Activated CD4-positive, alpha-beta memory T cell treated with anti-CD3 and anti-CD28 coated beads, Interleukin-2, amount 10 ng/mL, durations not matched to agents 7 days and 5 days (primary cell): ENCODE measurements at regions of chr3 and their contacts with region 1.

Region 1: GRCh38 chr3:148991194-148992026 is at the start of gene GYG1:
- DNase-seq: peak; percentile 80
- H3K4me3 Mint-ChIP-seq: peak within 1 kb of the TSS; percentile 73
- H3K27ac Mint-ChIP-seq: peak within 1 kb of the TSS; percentile 81
- H3K4me1 Mint-ChIP-seq: peaks cover 28% of the 10 kb centered on the region
- H3K27me3 Mint-ChIP-seq: no peaks in the 10 kb centered on the region
- total RNA-seq, gene GYG1: 44.5 to 46.5 TPM

Region 2: DNA sequence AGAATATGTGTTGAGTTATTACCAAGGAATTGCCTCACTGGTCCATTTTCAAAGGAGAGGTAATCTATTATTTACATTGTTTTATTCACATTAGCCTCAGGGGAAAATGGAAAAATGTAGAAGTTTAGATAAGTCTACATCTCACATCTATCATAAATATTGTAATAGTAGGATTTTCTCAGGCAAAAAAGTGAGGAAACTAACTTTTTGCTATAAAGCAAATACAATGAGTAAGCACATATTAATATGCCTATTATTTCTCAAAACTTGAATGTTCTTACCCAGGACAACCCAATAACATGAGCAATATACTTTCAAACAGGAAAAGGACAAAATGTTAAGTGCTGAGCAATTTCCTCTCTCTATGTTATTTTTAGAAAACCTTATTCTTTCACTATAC is 478.2 kb before region 1 on chr3:
- CTCF ChIA-PET with region 1: no interaction called
- POLR2A ChIA-PET with region 1: no interaction called
- DNase-seq: no peak
- H3K4me3 Mint-ChIP-seq: no peak overlapping the region
- H3K27ac Mint-ChIP-seq: no peak overlapping the region
- H3K4me1 Mint-ChIP-seq: no peaks in the 10 kb centered on the region
- H3K27me3 Mint-ChIP-seq: no peaks in the 10 kb centered on the region

Region 3: DNA sequence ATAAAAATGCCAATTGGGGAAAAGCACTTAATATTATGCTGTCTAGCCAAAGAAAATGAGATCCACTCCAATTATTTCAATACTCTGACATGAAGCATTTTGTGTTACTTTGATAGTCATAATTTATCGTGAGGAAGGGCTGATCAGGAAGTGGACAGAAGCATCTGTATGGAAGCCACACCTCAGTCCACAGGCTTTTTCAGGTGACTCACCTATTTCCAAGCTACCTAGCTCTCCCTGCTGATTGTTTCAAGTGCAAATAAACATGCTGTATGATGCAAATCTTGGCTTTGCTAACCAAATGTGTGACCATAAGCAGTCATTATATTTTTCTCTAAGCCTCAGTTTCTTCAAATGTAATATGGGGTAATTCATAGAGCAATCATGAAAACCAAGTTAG is 194.6 kb before region 1 on chr3:
- CTCF ChIA-PET with region 1: no interaction called
- POLR2A ChIA-PET with region 1: no interaction called
- DNase-seq: no peak
- H3K4me3 Mint-ChIP-seq: no peak overlapping the region
- H3K27ac Mint-ChIP-seq: no peak overlapping the region
- H3K4me1 Mint-ChIP-seq: no peaks in the 10 kb centered on the region
- H3K27me3 Mint-ChIP-seq: no peaks in the 10 kb centered on the region

Region 4: DNA sequence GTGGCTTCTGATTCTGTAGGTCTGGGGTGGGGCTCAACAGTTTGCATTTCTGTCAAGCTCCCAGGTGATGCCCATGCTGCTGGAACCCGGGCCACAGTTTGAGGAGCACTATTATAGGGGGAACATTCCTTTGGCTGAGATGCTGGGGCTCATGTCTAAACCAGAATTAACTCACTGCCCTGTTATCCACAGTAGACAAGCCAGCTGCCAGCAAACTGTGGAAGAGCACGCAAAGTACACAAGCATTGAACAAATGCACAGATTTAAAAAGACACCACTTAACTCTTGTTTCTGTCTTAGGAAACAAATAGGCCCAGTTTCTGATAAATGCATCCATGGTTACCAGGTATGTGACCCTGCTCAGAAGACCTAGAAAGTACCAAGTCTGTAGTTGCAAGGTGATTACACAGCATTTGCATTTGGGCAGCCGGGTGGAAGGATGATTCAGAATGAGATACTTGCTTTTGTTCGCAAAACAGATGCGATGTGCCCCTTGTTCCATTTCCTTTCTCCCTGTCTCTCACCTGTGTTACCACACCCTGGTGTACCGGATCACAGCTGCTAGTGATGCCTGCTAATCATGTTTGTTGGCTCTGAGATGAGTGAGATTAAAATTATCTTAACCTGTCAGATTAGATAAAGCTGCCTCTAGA is 12.4 kb after region 1 on chr3:
- CTCF ChIA-PET with region 1: interaction called, 8 read pairs
- POLR2A ChIA-PET with region 1: interaction called, 49 read pairs
- DNase-seq: peak; percentile 54
- H3K4me3 Mint-ChIP-seq: no peak overlapping the region
- H3K27ac Mint-ChIP-seq: peak overlapping the region; percentile 65
- H3K4me1 Mint-ChIP-seq: peaks cover 51% of the 10 kb centered on the region
- H3K27me3 Mint-ChIP-seq: no peaks in the 10 kb centered on the region

Region 5: DNA sequence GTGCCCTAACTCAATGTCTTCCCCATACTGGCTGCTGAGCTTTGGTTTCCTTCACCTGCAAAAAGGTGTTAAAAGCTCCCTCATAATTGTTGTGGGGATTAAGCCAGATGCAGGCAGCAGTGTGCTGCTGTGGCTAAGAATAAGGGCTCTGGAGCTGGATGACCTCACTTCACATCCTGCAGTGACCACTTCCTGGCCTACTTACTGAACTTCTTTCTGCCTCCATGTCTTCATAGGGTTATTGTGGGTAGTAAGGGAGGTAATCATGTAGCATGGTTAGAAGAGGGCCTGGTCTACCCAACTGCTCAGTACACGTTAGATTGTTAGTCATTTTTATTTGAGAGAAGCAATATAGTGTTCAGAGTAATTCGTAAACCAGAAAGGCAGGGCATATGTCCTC is 18.3 kb after region 1 on chr3:
- CTCF ChIA-PET with region 1: interaction called, 8 read pairs
- POLR2A ChIA-PET with region 1: interaction called, 49 read pairs
- DNase-seq: peak; percentile 76
- H3K4me3 Mint-ChIP-seq: no peak overlapping the region
- H3K27ac Mint-ChIP-seq: peak overlapping the region; percentile 88
- H3K4me1 Mint-ChIP-seq: peaks cover 45% of the 10 kb centered on the region
- H3K27me3 Mint-ChIP-seq: no peaks in the 10 kb centered on the region

Region 6: DNA sequence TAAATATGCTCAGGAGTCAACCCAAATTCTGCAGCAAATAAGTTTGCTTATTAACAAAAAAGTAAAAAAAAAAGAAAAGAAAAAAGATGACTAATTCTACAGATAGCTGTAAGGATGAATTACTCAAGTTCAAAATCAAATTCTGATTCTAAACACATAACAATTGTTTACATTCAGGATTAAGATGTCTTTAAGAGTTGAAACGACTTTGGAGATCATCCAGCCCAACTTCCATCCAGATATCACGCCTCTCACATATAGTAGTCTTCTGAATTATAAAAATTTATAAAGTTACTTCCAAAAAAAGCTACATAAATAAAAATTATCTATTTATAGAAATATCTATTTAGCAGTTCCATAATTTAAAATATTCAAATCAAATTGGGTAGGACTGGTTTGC is 39.7 kb after region 1 on chr3:
- CTCF ChIA-PET with region 1: no interaction called
- POLR2A ChIA-PET with region 1: no interaction called
- DNase-seq: no peak
- H3K4me3 Mint-ChIP-seq: no peak overlapping the region
- H3K27ac Mint-ChIP-seq: no peak overlapping the region
- H3K4me1 Mint-ChIP-seq: peaks cover 2% of the 10 kb centered on the region
- H3K27me3 Mint-ChIP-seq: no peaks in the 10 kb centered on the region

Region 7: DNA sequence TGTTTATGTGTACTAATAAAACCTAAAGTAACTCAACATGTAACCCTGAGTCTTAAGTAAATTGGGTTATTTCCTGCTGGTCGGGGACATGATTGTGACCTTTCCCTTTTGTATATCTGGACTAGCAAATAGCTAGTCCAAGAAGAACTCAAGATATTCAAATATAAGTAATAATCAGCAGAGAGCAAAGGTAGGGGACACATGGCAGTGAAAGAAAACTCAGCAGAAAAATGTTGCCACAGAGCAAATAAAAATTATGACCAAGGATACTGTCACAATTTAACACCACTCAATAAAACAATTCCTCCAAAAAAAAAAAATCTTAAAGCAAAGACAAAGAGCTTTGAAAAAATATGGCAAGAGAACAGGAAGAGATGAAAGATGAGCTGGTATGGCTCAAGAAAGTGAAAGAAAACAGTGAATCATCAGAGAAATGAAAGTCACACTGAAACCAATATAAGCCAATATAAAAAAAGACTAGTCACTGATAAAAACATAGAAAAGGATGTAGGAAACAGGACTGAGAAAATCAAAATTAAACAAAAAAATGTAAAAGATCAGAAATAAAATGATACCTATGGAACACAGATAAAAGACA is 51.5 kb after region 1 on chr3:
- CTCF ChIA-PET with region 1: no interaction called
- POLR2A ChIA-PET with region 1: interaction called, 13 read pairs
- DNase-seq: no peak
- H3K4me3 Mint-ChIP-seq: no peak overlapping the region
- H3K27ac Mint-ChIP-seq: peak overlapping the region; percentile 66
- H3K4me1 Mint-ChIP-seq: peaks cover 23% of the 10 kb centered on the region
- H3K27me3 Mint-ChIP-seq: no peaks in the 10 kb centered on the region

Region 8: DNA sequence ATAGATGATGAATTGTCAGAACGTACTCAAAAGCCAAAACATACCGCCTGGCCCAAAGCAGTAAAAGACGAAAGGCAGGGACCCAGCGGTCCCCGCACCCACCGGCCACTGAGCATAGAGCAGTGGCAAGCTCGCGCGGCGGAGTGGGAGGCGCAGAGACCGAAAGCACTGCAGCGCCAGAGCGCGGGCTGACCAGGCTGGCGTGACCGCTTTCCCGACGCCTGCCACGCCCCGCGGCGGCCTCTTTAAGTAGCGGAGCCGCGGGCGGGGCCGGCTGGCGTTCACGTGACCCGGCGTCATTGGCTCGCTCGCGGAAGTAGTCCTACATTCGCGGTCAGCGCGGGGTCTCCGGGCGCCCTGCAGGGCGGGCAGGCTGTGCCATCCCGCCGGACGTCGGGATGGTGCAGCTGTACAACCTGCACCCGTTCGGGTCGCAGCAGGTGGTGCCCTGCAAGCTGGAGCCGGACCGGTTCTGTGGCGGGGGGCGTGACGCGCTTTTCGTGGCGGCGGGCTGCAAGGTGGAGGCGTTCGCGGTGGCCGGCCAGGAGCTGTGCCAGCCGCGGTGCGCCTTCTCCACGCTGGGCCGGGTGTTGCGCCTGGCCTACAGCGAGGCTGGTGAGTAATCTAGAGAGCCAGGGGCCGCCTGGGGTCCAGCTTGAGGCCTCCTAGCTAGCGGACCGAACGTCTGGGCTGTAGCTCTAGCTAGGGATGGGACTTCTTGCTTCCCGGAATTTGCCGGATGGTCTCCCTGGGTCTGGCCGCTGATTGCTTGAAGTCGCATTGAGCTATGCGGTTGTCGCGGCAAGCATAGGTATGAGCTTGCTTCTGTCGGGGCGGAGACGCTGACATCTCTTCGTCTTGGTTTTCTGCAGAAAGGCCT is 138.2 kb after region 1 on chr3 and contains the start of gene HPS3:
- CTCF ChIA-PET with region 1: no interaction called
- POLR2A ChIA-PET with region 1: interaction called, 20 read pairs
- DNase-seq: peak; percentile 89
- H3K4me3 Mint-ChIP-seq: peak within 1 kb of the TSS; percentile 93
- H3K27ac Mint-ChIP-seq: peak within 1 kb of the TSS; percentile 80
- H3K4me1 Mint-ChIP-seq: peaks cover 36% of the 10 kb centered on the region
- H3K27me3 Mint-ChIP-seq: peaks cover 16% of the 10 kb centered on the region
- total RNA-seq, gene HPS3: 33.0 to 33.7 TPM